ENCODE measurements at regions of chr7 and their contacts with region 1.

Region 1: GRCh38 chr7:108736221-108736891 is 166.7 kb downstream of the DNAJB9 start:
- DNase-seq: peak in 1 of 2 experiments; percentile 41
- H3K4me3 ChIP-seq: no peak overlapping the region
- H3K4me3 Mint-ChIP-seq: peak overlapping the region; percentile 3
- H3K27ac Mint-ChIP-seq: peak overlapping the region; percentile 1
- H3K4me1 ChIP-seq: peaks cover 26% of the 10 kb centered on the region
- H3K4me1 Mint-ChIP-seq: peaks cover 14% of the 10 kb centered on the region
- H3K27me3 ChIP-seq: no peaks in the 10 kb centered on the region
- H3K27me3 Mint-ChIP-seq: no peaks in the 10 kb centered on the region
- CTCF ChIP-seq: no peak

Region 2: GRCh38 chr7:108581639-108582491 is 154.5 kb before region 1 on chr7:
- CTCF ChIA-PET with region 1: interaction called, 3 read pairs
- POLR2A ChIA-PET with region 1: no interaction called
- intact Hi-C with region 1: loop called (anchors 10 kb)
- DNase-seq: peak; percentile 82 to 89
- H3K4me3 ChIP-seq: no peak overlapping the region
- H3K4me3 Mint-ChIP-seq: peak overlapping the region; percentile 44
- H3K27ac Mint-ChIP-seq: peak overlapping the region; percentile 97
- H3K4me1 ChIP-seq: peaks cover 26% of the 10 kb centered on the region
- H3K4me1 Mint-ChIP-seq: peaks cover 36% of the 10 kb centered on the region
- H3K27me3 ChIP-seq: no peaks in the 10 kb centered on the region
- H3K27me3 Mint-ChIP-seq: no peaks in the 10 kb centered on the region
- CTCF ChIP-seq: no peak

Region 3: DNA sequence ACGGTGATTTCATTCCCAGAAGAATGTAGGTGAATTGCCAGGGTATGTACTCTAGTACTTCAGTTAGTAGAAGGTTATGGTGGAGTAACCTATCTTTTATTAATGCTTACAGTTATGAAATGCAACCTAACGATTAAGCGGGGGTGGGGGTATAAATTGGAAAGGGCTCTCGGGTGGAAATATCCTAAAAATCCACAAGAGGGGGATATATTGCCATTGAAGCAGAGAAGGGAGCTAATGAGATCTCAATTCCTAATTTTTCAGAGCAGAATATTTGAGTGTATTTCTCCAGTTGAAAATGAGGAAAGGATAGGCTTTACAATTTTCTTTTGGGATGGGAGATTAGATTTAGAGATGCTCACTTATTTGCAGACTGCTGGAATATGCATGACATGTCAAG is 75.9 kb before region 1 on chr7:
- CTCF ChIA-PET with region 1: no interaction called
- POLR2A ChIA-PET with region 1: no interaction called
- intact Hi-C with region 1: loop called (anchors 1 kb)
- DNase-seq: peak in 1 of 2 experiments; percentile 17
- H3K4me3 ChIP-seq: no peak overlapping the region
- H3K4me3 Mint-ChIP-seq: no peak overlapping the region
- H3K27ac Mint-ChIP-seq: no peak overlapping the region
- H3K4me1 ChIP-seq: no peaks in the 10 kb centered on the region
- H3K4me1 Mint-ChIP-seq: no peaks in the 10 kb centered on the region
- H3K27me3 ChIP-seq: no peaks in the 10 kb centered on the region
- H3K27me3 Mint-ChIP-seq: no peaks in the 10 kb centered on the region
- CTCF ChIP-seq: peak; percentile 27 to 58

Region 4: DNA sequence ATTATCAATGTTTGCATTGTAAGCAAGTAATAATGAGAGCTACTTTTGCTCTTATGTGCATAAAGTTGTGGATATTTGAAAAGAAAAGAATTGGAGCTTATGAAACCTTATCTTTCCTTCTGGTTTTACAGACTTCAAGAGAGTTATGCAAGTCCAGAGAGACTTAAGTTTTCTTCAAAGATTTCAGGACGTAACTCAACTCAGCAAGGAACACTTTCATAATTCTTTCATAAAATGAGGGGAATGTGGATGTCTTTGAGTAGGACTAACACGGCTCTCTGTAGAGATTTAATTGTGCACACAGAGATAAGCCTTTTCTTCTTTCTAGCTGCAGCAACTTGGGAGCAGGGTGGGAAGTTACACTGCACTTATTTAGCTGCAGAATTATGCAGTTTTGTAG is 69.1 kb before region 1 on chr7:
- CTCF ChIA-PET with region 1: no interaction called
- POLR2A ChIA-PET with region 1: no interaction called
- intact Hi-C with region 1: loop called (anchors 1 kb)
- DNase-seq: peak in 1 of 2 experiments; percentile 13
- H3K4me3 ChIP-seq: no peak overlapping the region
- H3K4me3 Mint-ChIP-seq: no peak overlapping the region
- H3K27ac Mint-ChIP-seq: no peak overlapping the region
- H3K4me1 ChIP-seq: no peaks in the 10 kb centered on the region; the same call in 1 of the 2 replicates
- H3K4me1 Mint-ChIP-seq: peaks cover 7% of the 10 kb centered on the region
- H3K27me3 ChIP-seq: no peaks in the 10 kb centered on the region
- H3K27me3 Mint-ChIP-seq: no peaks in the 10 kb centered on the region
- CTCF ChIP-seq: no peak

Region 5: GRCh38 chr7:108815822-108816221 is 79.5 kb after region 1 on chr7:
- CTCF ChIA-PET with region 1: no interaction called
- POLR2A ChIA-PET with region 1: no interaction called
- intact Hi-C with region 1: loop called (anchors 5 kb)
- DNase-seq: no peak
- H3K4me3 ChIP-seq: no peak overlapping the region
- H3K4me3 Mint-ChIP-seq: no peak overlapping the region
- H3K27ac Mint-ChIP-seq: no peak overlapping the region
- H3K4me1 ChIP-seq: no peaks in the 10 kb centered on the region
- H3K4me1 Mint-ChIP-seq: peaks cover 6% of the 10 kb centered on the region
- H3K27me3 ChIP-seq: no peaks in the 10 kb centered on the region
- H3K27me3 Mint-ChIP-seq: no peaks in the 10 kb centered on the region
- CTCF ChIP-seq: no peak

Region 6: DNA sequence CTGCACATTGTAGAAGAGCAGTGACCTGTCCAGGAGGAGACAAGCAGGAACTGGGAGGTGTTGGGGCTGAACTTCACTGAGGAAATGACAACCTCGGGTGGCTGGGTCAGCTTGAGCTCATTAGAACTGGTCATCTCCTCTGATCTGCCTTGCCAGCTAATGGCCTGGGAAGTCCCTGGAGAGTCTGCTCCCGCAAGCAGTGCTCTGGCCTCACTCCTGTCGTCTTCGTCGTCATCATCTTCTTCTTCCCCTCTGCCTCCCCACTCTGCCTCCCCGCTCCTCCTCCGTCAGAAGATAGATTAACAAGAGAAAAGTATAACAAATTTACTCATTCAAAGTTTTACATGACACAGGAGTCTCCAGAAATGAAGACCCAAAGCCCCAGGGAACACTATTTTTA is 258.5 kb after region 1 on chr7:
- CTCF ChIA-PET with region 1: no interaction called
- POLR2A ChIA-PET with region 1: no interaction called
- intact Hi-C with region 1: loop called (anchors 5 kb)
- DNase-seq: no peak
- H3K4me3 ChIP-seq: no peak overlapping the region
- H3K4me3 Mint-ChIP-seq: no peak overlapping the region
- H3K27ac Mint-ChIP-seq: no peak overlapping the region
- H3K4me1 ChIP-seq: peaks cover 33% of the 10 kb centered on the region
- H3K4me1 Mint-ChIP-seq: peaks cover 48% of the 10 kb centered on the region
- H3K27me3 ChIP-seq: no peaks in the 10 kb centered on the region
- H3K27me3 Mint-ChIP-seq: no peaks in the 10 kb centered on the region
- CTCF ChIP-seq: no peak

Region 7: DNA sequence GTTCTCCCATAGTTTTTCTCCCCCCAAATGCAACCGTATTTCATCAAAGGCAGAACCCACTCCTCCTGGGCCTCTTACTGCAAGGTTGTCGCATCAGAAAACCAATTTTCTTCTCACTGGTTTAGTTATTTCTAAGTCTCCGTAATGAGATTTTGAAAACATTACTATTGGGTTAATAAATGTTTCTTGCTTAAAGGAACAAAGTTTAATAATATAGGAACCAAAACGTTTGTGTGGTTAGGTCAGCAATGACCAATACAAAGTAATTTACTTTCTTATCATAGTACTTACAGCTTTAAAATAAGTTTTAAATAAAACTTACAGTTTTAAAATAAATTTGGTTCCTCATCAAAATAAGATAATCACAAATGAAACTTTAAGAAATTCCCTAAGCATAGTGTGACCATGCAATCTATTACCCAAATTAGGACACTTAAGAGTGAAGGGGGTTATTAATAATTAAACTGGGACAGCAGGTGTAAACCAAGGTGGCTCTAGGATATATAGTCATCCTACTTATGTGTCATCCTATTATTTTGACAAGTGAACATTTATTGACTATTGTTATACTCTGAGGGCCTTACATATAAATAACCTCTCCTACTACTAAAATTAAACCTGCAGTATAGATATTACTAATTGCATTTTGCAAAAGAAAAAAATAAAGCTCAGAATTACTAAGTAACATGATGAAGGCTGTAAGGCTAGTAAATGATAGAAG is 1939.2 kb after region 1 on chr7:
- CTCF ChIA-PET with region 1: no interaction called
- POLR2A ChIA-PET with region 1: no interaction called
- intact Hi-C with region 1: loop called (anchors 10 kb)
- DNase-seq: no peak
- H3K4me3 ChIP-seq: no peak overlapping the region
- H3K4me3 Mint-ChIP-seq: no peak overlapping the region
- H3K27ac Mint-ChIP-seq: peak overlapping the region; percentile 96
- H3K4me1 ChIP-seq: peaks cover 29% of the 10 kb centered on the region
- H3K4me1 Mint-ChIP-seq: peaks cover 14% of the 10 kb centered on the region
- H3K27me3 ChIP-seq: no peaks in the 10 kb centered on the region
- H3K27me3 Mint-ChIP-seq: no peaks in the 10 kb centered on the region
- CTCF ChIP-seq: no peak

Measured in Caco-2 (cell line).